ENCODE measurements at regions of chr12 and their contacts with region 1.

Region 1: DNA sequence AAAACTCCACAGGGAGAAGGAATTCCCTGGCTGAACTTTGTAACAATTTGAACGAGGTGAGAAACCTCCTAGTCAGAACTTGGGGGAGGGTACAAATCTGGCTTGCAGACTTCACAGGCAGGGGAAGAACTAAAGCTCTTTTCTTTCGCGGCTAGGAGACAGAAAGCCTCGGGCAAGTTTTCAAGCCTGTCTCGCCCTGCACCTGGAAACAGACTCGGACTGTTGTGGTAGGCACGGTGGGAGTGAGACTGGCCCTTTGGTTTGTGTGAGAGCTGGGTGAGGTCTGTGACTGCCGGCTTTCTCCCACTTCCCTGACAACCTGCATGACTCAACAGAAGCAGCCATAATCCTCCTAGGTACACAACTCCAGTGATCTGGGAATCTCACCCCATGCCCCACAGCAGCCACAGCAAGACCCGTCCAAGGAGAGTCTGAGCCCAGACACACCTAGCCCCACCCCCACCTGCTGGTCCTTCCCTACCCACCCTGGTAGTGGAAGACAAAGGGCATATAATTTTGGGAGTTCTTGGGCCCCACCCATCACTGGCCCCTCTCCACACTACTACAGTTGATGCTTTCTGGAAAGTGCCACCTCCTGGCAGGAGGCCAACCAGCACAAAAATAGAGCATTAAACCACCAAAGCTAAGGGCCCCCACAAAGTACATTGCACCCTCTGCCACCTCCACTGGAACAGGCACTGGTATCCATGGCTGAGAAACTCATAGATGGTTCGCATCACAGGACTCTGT is 102.7 kb upstream of the ST8SIA1 start:
- DNase-seq: peak; percentile 86 to 93
- H3K4me3 ChIP-seq: peak overlapping the region; percentile 57; the same call in 1 of the 2 replicates
- H3K27ac ChIP-seq: peak overlapping the region; percentile 97
- H3K4me1 ChIP-seq: peaks cover 42% of the 10 kb centered on the region
- H3K27me3 ChIP-seq: no peaks in the 10 kb centered on the region
- CTCF ChIP-seq: no peak

Region 2: GRCh38 chr12:22018860-22019259 is 418.3 kb before region 1 on chr12:
- CTCF ChIA-PET with region 1: interaction called, 14 read pairs
- POLR2A ChIA-PET with region 1: no interaction called
- intact Hi-C with region 1: no loop called
- DNase-seq: no peak
- H3K4me3 ChIP-seq: no peak overlapping the region
- H3K27ac ChIP-seq: no peak overlapping the region
- H3K4me1 ChIP-seq: 0 out of 2 replicates have a peak, but pooled peaks cover 8% of the 10 kb centered on the region
- H3K27me3 ChIP-seq: no peaks in the 10 kb centered on the region
- CTCF ChIP-seq: peak; percentile 77